CD8-positive, alpha-beta T cell (primary cell): ENCODE measurements at regions of chr12 and their contacts with region 1.

Region 1: DNA sequence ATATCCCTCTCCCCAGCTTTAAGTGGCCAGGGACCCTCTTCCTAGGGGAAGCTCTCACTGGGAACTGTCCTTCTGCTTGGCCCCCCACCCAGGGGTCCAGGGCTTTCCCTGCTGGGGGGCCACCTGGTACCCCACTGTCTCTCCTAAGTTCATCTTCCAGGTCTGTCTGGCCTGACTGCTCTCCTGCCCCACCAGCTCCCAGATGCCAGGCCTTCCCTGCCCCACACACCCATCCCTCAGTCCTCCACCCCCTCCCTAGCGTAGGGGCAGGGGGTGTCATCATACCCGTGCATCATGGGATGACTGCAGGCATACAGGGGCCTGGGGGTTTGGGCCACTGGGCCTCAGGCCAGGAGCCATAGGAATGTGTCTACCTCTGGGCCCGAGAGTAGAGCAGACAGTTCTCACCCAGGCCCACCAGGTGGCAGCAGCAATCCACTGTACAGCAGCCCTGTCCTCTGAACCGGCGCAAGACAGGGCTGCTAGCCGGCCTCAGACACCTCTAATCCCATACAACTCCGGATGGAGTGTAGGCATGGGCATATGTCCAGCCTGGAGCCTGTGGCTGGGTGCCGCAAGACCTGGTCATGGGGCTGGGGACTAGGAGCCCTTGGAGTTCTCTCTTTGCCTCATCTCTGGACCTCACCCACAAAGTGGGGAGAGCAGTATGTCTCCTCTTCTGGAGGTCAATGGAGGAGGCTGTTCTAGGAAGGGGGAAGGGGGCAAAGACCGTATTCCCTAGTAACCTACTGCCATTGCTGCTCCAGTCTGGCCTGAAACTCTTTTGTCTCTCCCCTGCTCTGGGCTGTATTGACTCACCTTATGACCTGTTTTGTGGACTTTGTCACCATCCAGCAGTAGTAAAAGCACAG is 10.0 kb upstream of the SMARCD1 start:
- DNase-seq: peak; percentile 71 to 89 (median 80)
- ATAC-seq: peak; percentile 98
- H3K4me3 ChIP-seq: no peak overlapping the region
- H3K4me3 Mint-ChIP-seq: no peak overlapping the region
- H3K27ac ChIP-seq: no peak overlapping the region
- H3K27ac Mint-ChIP-seq: no peak overlapping the region
- H3K4me1 ChIP-seq: peaks cover 6% of the 10 kb centered on the region
- H3K4me1 Mint-ChIP-seq: peaks cover 8% of the 10 kb centered on the region
- H3K27me3 ChIP-seq: no peaks in the 10 kb centered on the region
- H3K27me3 Mint-ChIP-seq: no peaks in the 10 kb centered on the region
- CTCF ChIP-seq: peak; percentile 88

Region 2: DNA sequence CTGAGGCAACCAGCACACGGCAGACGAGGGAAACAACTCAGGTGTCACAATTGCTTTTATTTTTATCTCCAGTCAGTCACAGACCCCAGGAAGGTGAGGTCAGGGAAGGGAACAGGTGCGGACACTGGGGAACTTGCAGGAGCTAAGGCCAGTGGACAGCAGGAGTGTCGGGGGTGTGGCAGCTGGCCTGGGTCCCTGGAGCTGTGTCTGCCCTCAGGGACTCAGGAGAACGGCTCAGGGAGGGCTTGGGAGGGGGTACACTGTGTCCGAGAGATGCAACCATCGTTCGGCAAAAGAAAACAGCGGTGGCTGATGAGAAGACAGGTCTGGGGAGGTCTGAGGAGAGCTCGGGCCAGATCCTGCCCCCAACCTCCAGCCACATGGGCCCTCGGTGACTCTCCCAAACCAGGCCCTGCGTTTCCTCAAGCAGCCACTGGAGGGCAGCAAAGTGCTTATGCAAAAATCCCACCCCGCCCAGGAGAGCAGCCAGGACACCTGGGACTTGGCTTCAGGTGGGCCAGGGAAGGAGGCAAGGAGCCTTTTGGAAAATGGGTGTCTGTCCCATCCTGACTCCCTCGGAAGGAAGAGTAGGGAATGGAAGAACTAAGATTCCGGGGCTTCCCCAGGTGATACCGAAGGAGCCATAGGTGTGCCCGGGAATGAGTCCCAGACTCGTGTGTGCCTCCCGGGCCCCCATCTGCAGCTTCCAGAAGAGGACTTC is 208.2 kb before region 1 on chr12:
- CTCF ChIA-PET with region 1: no interaction called
- POLR2A ChIA-PET with region 1: no interaction called
- intact Hi-C with region 1: loop called in 1 of 2 experiments (anchors 1 kb)
- DNase-seq: peak; percentile 54 to 83 (median 74)
- ATAC-seq: peak; percentile 89
- H3K4me3 ChIP-seq: no peak overlapping the region
- H3K4me3 Mint-ChIP-seq: no peak overlapping the region
- H3K27ac ChIP-seq: no peak overlapping the region
- H3K27ac Mint-ChIP-seq: no peak overlapping the region
- H3K4me1 ChIP-seq: no peaks in the 10 kb centered on the region
- H3K4me1 Mint-ChIP-seq: no peaks in the 10 kb centered on the region
- H3K27me3 ChIP-seq: no peaks in the 10 kb centered on the region
- H3K27me3 Mint-ChIP-seq: no peaks in the 10 kb centered on the region
- CTCF ChIP-seq: peak; percentile 89

Region 3: DNA sequence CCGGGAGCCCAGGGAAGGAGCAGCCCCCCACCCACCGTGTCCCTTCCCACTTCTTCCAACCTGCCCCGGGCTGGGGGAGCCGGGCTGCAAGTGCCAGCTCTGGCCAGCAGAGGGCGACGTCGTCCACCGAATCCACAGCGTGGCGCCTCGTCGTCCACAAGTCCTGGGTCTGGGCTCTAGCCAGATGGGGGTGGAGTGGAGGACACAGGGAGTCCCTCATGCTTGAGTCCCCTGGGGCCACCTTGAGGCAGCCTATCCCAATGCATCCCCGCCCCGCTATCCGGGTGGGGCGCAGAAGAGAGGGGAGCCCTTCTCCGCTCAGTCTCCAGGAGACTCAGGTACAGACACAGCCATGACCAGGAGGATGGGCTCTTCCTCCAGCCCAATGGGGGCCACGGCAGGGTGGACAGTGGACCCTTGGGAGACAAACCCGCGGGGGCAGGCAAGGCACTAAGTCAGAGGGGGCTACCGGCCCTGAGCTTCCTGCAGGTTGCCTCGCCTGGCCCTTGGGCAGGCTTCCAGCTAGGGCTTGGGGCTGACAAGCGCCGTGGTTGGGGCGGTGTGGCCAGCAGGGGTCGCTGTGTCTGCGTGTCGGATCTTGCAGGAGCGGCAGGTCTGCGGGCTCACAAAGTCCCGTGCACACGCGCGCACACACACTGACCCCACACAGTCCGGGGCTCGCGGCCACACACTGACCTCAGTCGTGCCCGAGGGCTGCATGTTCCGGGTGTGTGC is 108.0 kb before region 1 on chr12:
- CTCF ChIA-PET with region 1: interaction called, 96 read pairs
- POLR2A ChIA-PET with region 1: no interaction called
- intact Hi-C with region 1: loop called in 1 of 2 experiments (anchors 1 kb)
- DNase-seq: peak; percentile 87 to 98 (median 91)
- ATAC-seq: peak; percentile 88
- H3K4me3 ChIP-seq: peak overlapping the region; percentile 52 to 59
- H3K4me3 Mint-ChIP-seq: peak overlapping the region; percentile 74
- H3K27ac ChIP-seq: no peak overlapping the region
- H3K27ac Mint-ChIP-seq: no peak overlapping the region
- H3K4me1 ChIP-seq: peaks cover 9% of the 10 kb centered on the region
- H3K4me1 Mint-ChIP-seq: peaks cover 6% of the 10 kb centered on the region
- H3K27me3 ChIP-seq: peaks cover 4 to 14% of the 10 kb centered on the region in 2 experiments
- H3K27me3 Mint-ChIP-seq: peaks cover 41% of the 10 kb centered on the region
- CTCF ChIP-seq: peak; percentile 98

Region 4: DNA sequence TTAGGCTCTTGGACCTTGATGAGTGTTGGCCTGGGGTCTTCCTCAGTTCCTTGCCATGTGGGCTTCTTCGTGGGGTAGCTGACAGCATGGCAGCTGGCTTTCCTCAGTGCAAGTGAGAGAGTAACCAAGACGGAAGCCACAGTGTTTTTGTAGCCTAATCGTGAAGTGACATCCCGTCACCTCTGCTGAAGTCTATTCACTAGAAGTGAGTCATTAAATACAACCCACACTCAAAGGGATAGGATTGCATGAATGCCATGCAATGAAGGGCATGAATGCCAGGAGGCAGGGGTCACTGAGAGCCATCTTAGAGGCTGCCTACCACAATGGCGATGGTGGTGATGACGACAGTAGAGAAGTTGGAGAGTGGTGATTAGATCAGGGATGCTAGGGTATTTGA is 31.3 kb before region 1 on chr12:
- CTCF ChIA-PET with region 1: interaction called, 191 read pairs
- POLR2A ChIA-PET with region 1: no interaction called
- intact Hi-C with region 1: loop called (anchors 1 kb)
- DNase-seq: no peak
- ATAC-seq: no peak
- H3K4me3 ChIP-seq: no peak overlapping the region
- H3K4me3 Mint-ChIP-seq: no peak overlapping the region
- H3K27ac ChIP-seq: no peak overlapping the region
- H3K27ac Mint-ChIP-seq: no peak overlapping the region
- H3K4me1 ChIP-seq: no peaks in the 10 kb centered on the region
- H3K4me1 Mint-ChIP-seq: no peaks in the 10 kb centered on the region
- H3K27me3 ChIP-seq: peaks cover 0 to under 1% of the 10 kb centered on the region in 2 experiments
- H3K27me3 Mint-ChIP-seq: peaks cover 14% of the 10 kb centered on the region
- CTCF ChIP-seq: no peak

Region 5: GRCh38 chr12:50314629-50315312 is 239.6 kb after region 1 on chr12:
- CTCF ChIA-PET with region 1: no interaction called
- POLR2A ChIA-PET with region 1: no interaction called
- intact Hi-C with region 1: loop called in 1 of 2 experiments (anchors 2 kb)
- DNase-seq: peak in 2 of 9 experiments; percentile 30 to 43
- ATAC-seq: no peak
- H3K4me3 ChIP-seq: no peak overlapping the region
- H3K4me3 Mint-ChIP-seq: no peak overlapping the region
- H3K27ac ChIP-seq: no peak overlapping the region
- H3K27ac Mint-ChIP-seq: no peak overlapping the region
- H3K4me1 ChIP-seq: no peaks in the 10 kb centered on the region
- H3K4me1 Mint-ChIP-seq: no peaks in the 10 kb centered on the region
- H3K27me3 ChIP-seq: no peaks in the 10 kb centered on the region
- H3K27me3 Mint-ChIP-seq: no peaks in the 10 kb centered on the region
- CTCF ChIP-seq: peak; percentile 48

Region 6: DNA sequence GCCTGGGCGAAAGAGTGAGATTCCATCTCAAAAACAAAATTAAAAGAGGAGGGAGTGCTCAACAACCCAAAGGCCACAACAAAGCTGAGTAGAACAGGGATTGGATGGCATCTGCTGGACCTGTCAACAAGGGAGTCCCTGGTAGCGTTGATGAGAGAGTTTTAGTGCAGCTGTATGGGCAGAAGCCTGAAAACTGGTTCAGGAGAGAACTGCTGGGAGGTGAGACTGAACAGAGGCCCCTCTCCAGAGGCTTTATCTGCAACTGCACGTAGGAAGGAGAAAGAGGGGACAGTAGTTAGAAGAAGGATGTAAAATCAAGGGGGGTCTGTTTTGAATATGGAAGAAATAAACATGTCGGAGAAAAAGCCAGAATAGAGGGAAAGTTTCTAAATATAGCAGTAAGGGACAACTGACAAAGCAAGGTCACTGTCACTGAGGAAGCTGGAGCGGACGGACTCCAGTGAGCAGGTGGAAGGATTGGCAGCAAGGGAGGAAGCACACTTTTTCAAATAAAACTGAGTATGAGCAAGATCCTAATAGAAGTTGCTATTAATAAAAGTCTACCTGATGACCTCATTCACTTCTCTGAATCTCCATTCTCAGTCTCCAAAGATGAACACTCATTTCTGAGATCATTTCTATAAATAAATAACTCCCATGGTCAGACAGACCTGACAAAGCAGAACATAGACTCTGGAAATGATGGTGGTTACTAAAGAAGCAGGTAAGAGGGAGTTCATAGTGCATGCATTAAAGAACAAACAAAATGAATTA is 677.0 kb after region 1 on chr12:
- CTCF ChIA-PET with region 1: no interaction called
- POLR2A ChIA-PET with region 1: no interaction called
- intact Hi-C with region 1: loop called in 1 of 2 experiments (anchors 5 kb)
- DNase-seq: no peak
- ATAC-seq: no peak
- H3K4me3 ChIP-seq: no peak overlapping the region
- H3K4me3 Mint-ChIP-seq: no peak overlapping the region
- H3K27ac ChIP-seq: no peak overlapping the region
- H3K27ac Mint-ChIP-seq: peak overlapping the region; percentile 11
- H3K4me1 ChIP-seq: no peaks in the 10 kb centered on the region
- H3K4me1 Mint-ChIP-seq: no peaks in the 10 kb centered on the region
- H3K27me3 ChIP-seq: no peaks in the 10 kb centered on the region
- H3K27me3 Mint-ChIP-seq: no peaks in the 10 kb centered on the region
- CTCF ChIP-seq: no peak